A549 (cell line): ENCODE measurements at regions of chr16 and their contacts with region 1.

Region 1: GRCh38 chr16:84754353-84754856 is 54.6 kb downstream of the USP10 start:
- DNase-seq: peak; percentile 78 to 86
- ATAC-seq: peak; percentile 88 to 90
- H3K4me3 ChIP-seq: no peak overlapping the region
- H3K27ac ChIP-seq: no peak overlapping the region
- H3K4me1 ChIP-seq: peaks cover 25% of the 10 kb centered on the region
- CTCF ChIP-seq: peak; percentile 89
- EP300 ChIP-seq: no peak
- POLR2A ChIP-seq: no peak
- RAD21 ChIP-seq: peak; percentile 79 to 86

Region 2: GRCh38 chr16:84548971-84549844 is 205.2 kb before region 1 on chr16:
- CTCF ChIA-PET with region 1: no interaction called
- POLR2A ChIA-PET with region 1: no interaction called
- DNase-seq: no peak
- ATAC-seq: no peak; a peak in 1 of 6 replicates
- H3K4me3 ChIP-seq: no peak overlapping the region
- H3K27ac ChIP-seq: peak overlapping the region in 1 of 2 experiments; percentile 36; a peak in 2 of 6 replicates
- H3K4me1 ChIP-seq: no peaks in the 10 kb centered on the region
- CTCF ChIP-seq: no peak
- EP300 ChIP-seq: no peak
- POLR2A ChIP-seq: no peak
- RAD21 ChIP-seq: no peak

Region 3: DNA sequence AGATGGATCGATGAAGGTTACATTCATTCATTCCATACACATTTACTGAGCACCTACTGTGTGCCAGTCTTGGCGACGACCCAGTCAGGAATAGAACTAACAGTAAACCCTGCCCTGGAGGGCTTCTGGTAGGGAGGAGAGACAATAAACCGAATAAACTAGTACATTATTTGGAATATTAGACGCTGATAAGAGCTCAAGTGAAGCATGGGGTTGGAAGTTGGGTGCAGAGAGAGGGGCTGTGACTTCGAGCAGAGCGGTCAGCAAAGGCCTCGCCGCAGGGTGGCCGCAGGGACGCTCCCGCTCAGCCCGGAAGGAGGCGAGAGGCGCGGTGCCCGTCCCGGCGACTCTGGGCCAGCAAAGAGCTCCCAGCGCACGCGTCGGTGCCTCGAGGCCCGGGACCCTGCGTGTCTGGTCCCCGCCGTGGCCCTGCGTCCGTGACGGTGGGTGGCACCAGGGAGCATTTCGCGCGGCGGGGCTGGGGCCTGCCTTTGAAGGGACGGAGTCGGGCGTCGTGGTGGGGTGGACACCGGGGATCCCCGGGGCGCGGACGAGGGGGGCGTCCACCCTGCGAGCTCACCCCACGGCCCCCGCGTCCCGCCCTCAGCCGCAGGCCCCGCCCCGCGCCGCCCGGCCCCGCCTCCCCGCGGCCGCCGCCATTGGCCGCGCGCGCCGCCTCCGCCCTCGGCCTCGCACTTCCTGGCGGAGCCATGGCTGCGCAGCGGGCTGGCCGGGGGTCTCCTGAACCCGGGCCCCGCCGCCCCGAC is 106.4 kb before region 1 on chr16 and contains the start of gene KLHL36:
- CTCF ChIA-PET with region 1: no interaction called
- POLR2A ChIA-PET with region 1: no interaction called
- DNase-seq: peak; percentile 46 to 82
- ATAC-seq: peak; percentile 82 to 91
- H3K4me3 ChIP-seq: peak within 1 kb of the TSS; percentile 92
- H3K27ac ChIP-seq: peak within 1 kb of the TSS; percentile 90 to 99
- H3K4me1 ChIP-seq: peaks cover 23% of the 10 kb centered on the region; the same call in 2 of the 3 replicates
- CTCF ChIP-seq: no peak
- EP300 ChIP-seq: no peak
- POLR2A ChIP-seq: no peak; the same call in 1 of the 2 replicates
- RAD21 ChIP-seq: no peak
- polyA plus RNA-seq, gene KLHL36: 21.0 and 22.3 TPM in 2 replicates

Region 4: DNA sequence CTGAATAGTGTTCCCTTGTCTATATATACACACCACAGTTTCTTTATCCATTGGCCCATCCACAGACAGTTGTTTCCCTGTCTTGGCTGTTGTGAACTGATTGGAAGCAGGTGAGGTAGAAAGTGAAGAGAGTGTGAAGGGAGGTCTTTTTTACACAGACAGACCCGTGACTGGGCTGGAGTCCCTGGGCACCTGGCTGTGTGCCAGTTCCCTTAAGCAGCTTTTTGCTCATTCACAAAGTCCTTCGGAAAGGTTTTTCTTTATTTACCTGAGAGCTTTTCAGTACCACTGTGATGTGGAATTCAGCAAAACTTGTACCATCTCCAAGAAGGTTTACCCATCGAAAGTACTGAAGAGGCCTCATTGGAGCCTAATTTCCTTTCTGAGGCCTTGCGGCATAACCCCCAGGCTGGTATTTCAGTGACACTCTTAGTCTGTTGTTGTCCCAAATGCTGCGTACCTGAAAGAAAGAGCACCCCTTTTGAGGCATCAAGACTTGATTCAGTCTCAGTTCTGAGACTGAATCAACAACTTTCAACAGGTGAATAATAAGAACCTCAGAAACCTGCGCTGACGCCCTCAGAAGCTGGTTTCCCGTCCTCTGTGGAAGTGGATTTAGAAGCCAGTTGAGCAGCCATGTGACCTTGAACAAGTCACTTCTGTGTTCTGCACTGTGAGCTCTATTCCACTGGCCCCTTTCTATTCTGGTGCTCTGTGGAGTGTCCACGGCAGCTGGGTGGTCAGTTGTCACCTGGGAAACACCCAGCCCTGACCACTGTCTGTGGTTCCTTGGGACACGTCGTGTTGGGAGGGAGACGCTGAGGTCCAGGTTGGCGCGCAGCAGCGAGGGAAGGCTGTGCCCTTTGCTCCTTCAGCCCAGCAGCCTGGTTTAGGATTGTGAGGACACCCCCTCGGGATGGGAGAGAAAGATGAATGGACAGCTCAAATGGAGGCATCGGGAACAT is 11.5 kb after region 1 on chr16:
- CTCF ChIA-PET with region 1: interaction called, 55 read pairs
- POLR2A ChIA-PET with region 1: no interaction called
- DNase-seq: no peak
- ATAC-seq: no peak
- H3K4me3 ChIP-seq: no peak overlapping the region
- H3K27ac ChIP-seq: no peak overlapping the region
- H3K4me1 ChIP-seq: no peaks in the 10 kb centered on the region
- CTCF ChIP-seq: no peak
- EP300 ChIP-seq: no peak
- POLR2A ChIP-seq: no peak
- RAD21 ChIP-seq: no peak

Region 5: GRCh38 chr16:84774810-84775209 is 20.4 kb after region 1 on chr16:
- CTCF ChIA-PET with region 1: interaction called, 55 read pairs
- POLR2A ChIA-PET with region 1: no interaction called
- DNase-seq: no peak
- ATAC-seq: no peak
- H3K4me3 ChIP-seq: no peak overlapping the region
- H3K27ac ChIP-seq: no peak overlapping the region
- H3K4me1 ChIP-seq: no peaks in the 10 kb centered on the region
- CTCF ChIP-seq: no peak
- EP300 ChIP-seq: no peak
- POLR2A ChIP-seq: no peak
- RAD21 ChIP-seq: no peak

Region 6: DNA sequence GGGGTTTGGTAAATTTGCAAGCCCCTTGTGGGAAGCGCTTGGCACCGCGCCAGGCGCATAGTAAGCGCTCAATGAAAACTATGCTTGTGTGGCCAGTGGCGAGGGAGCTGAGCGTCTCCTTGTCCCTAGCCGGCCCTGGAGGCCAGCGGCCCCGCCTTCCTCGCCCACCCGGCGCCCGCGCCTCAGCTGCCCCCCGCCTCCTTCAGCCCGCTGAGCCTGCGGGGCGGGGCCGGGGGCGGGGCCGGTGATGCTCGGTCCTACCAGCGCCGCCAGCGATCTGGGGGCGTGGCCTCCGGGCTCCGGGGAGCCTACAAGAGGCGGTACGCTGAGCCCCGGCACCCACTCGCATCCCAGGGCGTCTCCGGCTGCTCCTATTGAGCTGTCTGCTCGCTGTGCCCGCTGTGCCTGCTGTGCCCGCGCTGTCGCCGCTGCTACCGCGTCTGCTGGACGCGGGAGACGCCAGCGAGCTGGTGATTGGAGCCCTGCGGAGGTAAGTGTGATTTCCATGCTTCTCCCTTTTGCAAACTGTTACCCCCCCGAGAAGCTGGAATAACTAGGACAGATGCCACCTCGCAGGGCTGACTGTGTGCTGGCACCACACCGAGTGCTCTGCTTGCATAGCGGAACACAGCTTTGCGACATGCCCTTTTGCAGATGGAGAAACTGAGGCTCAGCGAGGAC is 65.4 kb after region 1 on chr16 and contains the start of gene CRISPLD2:
- CTCF ChIA-PET with region 1: interaction called, 14 read pairs
- POLR2A ChIA-PET with region 1: no interaction called
- DNase-seq: peak; percentile 83 to 93
- ATAC-seq: peak; percentile 93 to 99
- H3K4me3 ChIP-seq: peak within 1 kb of the TSS; percentile 44
- H3K27ac ChIP-seq: peak within 1 kb of the TSS in 1 of 2 experiments; percentile 55; a peak in 1 of 6 replicates
- H3K4me1 ChIP-seq: peaks cover 11% of the 10 kb centered on the region; the same call in 2 of the 3 replicates
- CTCF ChIP-seq: no peak
- EP300 ChIP-seq: no peak
- POLR2A ChIP-seq: peak; percentile 95
- RAD21 ChIP-seq: no peak
- polyA plus RNA-seq, gene CRISPLD2: 0.85 and 0.89 TPM in 2 replicates

Region 7: DNA sequence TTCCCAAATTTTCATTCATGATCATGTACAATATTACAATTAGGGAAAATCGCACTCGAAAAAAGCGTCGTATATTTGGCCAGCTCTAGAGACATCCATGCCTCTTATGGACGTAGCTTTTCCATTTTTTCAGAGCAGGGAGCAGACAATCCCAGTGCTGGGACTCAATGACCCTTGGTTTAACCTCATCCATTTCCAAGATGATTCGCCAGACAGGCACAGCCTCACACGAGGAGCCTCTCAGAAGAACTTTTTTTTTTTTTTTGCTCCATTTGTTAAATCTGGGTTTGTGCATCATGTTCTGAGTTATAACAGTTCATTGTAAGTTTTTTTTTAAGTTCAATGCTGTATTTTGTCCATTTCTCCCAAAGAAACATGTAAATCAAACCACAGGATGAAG is 164.9 kb after region 1 on chr16:
- CTCF ChIA-PET with region 1: interaction called, 32 read pairs
- POLR2A ChIA-PET with region 1: no interaction called
- DNase-seq: no peak
- ATAC-seq: no peak
- H3K4me3 ChIP-seq: no peak overlapping the region
- H3K27ac ChIP-seq: no peak overlapping the region
- H3K4me1 ChIP-seq: no peaks in the 10 kb centered on the region
- CTCF ChIP-seq: no peak
- EP300 ChIP-seq: no peak
- POLR2A ChIP-seq: no peak
- RAD21 ChIP-seq: no peak

Region 8: DNA sequence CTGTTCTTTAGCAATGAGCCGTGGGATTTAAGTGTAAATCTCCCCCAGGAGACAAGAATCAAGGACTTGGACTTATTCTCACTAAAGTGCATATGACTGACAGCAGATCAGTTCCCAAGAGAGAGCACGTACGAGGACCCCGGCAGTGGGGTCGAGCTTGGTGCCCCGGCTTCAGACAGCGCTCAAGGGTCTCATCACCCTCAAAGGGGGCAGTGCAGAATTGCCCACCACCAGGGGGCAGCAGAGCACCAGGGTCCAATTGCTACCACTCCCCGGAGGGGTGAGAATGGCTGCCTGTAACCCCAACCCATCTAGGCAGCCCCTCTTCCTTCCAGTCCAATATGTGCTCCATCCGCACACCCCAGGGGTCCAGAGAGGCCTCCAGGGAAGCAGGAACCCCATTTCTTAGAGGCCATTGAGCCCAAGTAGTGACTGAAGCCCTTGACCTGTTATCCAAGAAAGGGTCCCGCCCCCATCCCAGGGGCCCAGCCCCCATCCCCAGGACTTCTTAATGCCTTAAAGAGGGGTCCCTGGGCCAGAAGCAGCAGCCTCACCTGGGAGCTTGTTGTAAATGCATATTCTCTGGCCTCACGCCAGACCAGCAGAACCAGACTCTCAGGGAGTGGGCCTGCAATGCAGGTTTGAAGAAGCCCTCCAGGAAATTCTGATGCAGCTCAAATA is 170.8 kb after region 1 on chr16:
- CTCF ChIA-PET with region 1: interaction called, 32 read pairs
- POLR2A ChIA-PET with region 1: no interaction called
- DNase-seq: peak; percentile 48 to 60
- ATAC-seq: peak; percentile 67 to 90; a peak in 5 of 6 replicates
- H3K4me3 ChIP-seq: no peak overlapping the region
- H3K27ac ChIP-seq: no peak overlapping the region
- H3K4me1 ChIP-seq: peaks cover 5% of the 10 kb centered on the region; the same call in 1 of the 3 replicates
- CTCF ChIP-seq: peak; percentile 86
- EP300 ChIP-seq: no peak
- POLR2A ChIP-seq: no peak
- RAD21 ChIP-seq: peak; percentile 81 to 82